Activated CD8-positive, alpha-beta memory T cell treated with anti-CD3 and anti-CD28 coated beads, Interleukin-2, amount 10 ng/mL, durations not matched to agents 7 days and 5 days (primary cell): ENCODE measurements at regions of chr6 and their contacts with region 1.

Region 1: GRCh38 chr6:97186416-97186999 is 96.5 kb downstream of the MMS22L start:
- DNase-seq: peak; percentile 71
- ATAC-seq: peak; percentile 78
- H3K4me3 Mint-ChIP-seq: no peak overlapping the region
- H3K27ac Mint-ChIP-seq: no peak overlapping the region
- H3K4me1 Mint-ChIP-seq: no peaks in the 10 kb centered on the region
- H3K27me3 Mint-ChIP-seq: no peaks in the 10 kb centered on the region

Region 2: DNA sequence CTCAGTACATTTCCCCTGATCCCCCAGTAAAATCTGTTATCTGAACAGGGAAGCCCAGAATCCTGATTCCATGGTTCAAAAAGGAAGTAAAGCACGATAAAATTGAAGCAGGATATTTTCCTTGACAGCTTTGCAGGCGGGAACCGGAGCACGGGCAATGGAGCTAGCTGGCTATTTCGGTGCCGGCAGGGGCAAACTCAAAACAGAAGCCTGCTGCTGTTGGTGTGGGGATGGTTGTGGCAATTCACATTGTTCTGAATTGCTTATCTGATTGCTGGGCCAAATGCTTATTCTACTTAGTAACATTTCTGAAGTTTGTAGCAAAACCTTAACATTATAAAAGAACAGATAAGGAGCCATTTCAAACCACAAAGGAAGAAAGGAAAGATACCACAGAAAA is 75.9 kb before region 1 on chr6:
- CTCF ChIA-PET with region 1: no interaction called
- DNase-seq: no peak
- ATAC-seq: no peak
- H3K4me3 Mint-ChIP-seq: no peak overlapping the region
- H3K27ac Mint-ChIP-seq: no peak overlapping the region
- H3K4me1 Mint-ChIP-seq: peaks cover 19% of the 10 kb centered on the region
- H3K27me3 Mint-ChIP-seq: peaks cover 2% of the 10 kb centered on the region

Region 3: DNA sequence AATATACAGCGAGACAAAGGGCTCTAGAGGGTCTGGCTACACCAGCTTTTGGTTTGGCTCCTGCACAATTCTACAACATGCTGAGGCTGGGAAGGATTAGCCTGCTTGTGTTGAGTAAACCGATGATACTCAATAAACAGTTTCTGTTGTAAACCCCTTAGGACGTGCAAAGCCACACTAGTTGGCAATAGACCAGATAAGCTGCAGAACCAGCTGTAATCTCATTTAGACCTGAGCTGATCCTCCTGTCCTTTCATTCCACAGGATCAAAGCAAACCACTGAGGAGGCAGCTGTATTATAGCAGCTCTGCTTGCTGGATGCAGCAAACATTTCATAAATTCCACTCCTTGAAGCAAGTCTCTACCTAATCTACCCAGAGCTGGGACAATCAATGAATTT is 16.8 kb after region 1 on chr6:
- CTCF ChIA-PET with region 1: interaction called, 10 read pairs
- DNase-seq: no peak
- ATAC-seq: no peak
- H3K4me3 Mint-ChIP-seq: no peak overlapping the region
- H3K27ac Mint-ChIP-seq: no peak overlapping the region
- H3K4me1 Mint-ChIP-seq: peaks cover 3% of the 10 kb centered on the region
- H3K27me3 Mint-ChIP-seq: no peaks in the 10 kb centered on the region

Region 4: GRCh38 chr6:97275809-97276208 is 89.3 kb after region 1 on chr6:
- CTCF ChIA-PET with region 1: no interaction called
- DNase-seq: no peak
- ATAC-seq: no peak
- H3K4me3 Mint-ChIP-seq: no peak overlapping the region
- H3K27ac Mint-ChIP-seq: no peak overlapping the region
- H3K4me1 Mint-ChIP-seq: peaks cover 16% of the 10 kb centered on the region
- H3K27me3 Mint-ChIP-seq: no peaks in the 10 kb centered on the region

Region 5: DNA sequence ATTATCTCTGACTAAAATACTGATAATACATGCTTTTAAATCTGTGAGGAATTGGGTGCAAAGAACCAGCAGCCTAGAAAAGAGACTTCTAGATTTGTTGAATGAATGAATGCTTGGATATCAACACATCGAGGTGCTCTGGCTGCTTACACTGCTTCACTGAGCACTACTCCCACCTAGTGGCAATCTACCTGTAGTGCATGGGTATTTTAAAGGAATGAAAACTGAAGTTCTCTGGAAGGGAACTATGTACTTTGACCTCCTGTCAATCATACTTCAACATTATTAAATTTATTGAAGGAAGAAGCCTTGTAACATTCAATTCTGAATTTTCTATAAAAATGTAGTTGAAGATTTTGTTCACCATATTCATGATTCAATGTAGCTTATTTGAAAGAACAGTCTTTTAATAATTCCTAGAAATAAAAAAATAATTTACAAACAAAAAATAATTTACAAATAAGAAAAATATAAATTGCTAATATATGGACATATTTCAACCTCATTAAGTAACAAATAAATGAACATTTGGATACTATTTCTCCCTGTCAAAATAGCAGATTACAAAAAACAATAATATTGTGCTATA is 207.7 kb after region 1 on chr6:
- CTCF ChIA-PET with region 1: interaction called, 15 read pairs
- DNase-seq: peak; percentile 52
- ATAC-seq: peak; percentile 67
- H3K4me3 Mint-ChIP-seq: no peak overlapping the region
- H3K27ac Mint-ChIP-seq: no peak overlapping the region
- H3K4me1 Mint-ChIP-seq: no peaks in the 10 kb centered on the region
- H3K27me3 Mint-ChIP-seq: peaks cover 17% of the 10 kb centered on the region